Activated CD4-positive, alpha-beta T cell treated with anti-CD3 and anti-CD28 coated beads for 36 hours (primary cell): ENCODE measurements at regions of chr3 and their contacts with region 1.

Region 1: GRCh38 chr3:195271116-195271858 is at the start of gene XXYLT1:
- DNase-seq: peak; percentile 96
- ATAC-seq: peak; percentile 86
- H3K4me3 Mint-ChIP-seq: peak within 1 kb of the TSS; percentile 84
- H3K27ac Mint-ChIP-seq: peak within 1 kb of the TSS; percentile 87
- H3K4me1 Mint-ChIP-seq: peaks cover 17% of the 10 kb centered on the region
- H3K27me3 Mint-ChIP-seq: no peaks in the 10 kb centered on the region
- total RNA-seq, gene XXYLT1: 5.4 to 5.7 TPM

Region 2: DNA sequence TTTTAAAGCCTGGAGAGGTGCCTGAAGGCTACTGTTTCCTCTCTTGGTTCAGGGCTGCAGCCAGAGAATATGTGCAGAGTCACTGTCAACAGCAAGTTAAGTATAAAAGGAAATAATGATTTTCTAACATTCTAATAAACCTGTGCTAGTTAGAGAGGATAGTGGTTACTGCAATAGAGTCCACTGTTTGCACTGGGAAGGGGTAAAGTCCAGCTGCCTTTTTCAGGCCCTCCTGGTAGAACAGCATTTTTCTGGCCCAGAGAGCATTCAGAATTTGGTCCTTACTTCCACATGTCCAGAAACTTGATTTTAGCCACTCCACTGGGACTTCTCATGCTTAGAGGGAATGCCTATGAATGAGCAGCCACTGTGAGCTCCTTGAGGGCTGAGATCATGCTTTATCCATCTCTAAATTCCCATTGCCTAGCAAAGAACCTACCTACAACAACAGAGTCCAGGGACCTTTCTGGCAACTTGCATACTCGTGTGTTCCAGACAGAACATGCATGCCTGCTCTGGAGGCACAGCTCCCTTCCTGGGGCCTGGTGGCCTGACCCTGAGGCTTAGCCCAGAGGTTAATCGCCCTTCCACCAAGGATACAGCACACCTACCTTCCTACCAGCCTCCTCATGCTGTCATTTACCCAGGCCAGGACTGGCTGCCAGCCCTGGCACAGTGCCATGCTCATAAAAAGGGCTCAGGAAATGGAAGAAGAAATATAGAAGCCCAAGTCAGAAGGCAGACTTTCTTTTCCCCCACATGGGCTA is 734.2 kb before region 1 on chr3:
- CTCF ChIA-PET with region 1: no interaction called
- POLR2A ChIA-PET with region 1: no interaction called
- intact Hi-C with region 1: no loop called
- DNase-seq: no peak
- ATAC-seq: no peak
- H3K4me3 Mint-ChIP-seq: no peak overlapping the region
- H3K27ac Mint-ChIP-seq: no peak overlapping the region
- H3K4me1 Mint-ChIP-seq: peaks cover 14% of the 10 kb centered on the region
- H3K27me3 Mint-ChIP-seq: no peaks in the 10 kb centered on the region

Region 3: GRCh38 chr3:195385526-195385925 is 114.2 kb after region 1 on chr3:
- CTCF ChIA-PET with region 1: no interaction called
- POLR2A ChIA-PET with region 1: no interaction called
- intact Hi-C with region 1: no loop called
- DNase-seq: no peak
- ATAC-seq: no peak
- H3K4me3 Mint-ChIP-seq: no peak overlapping the region
- H3K27ac Mint-ChIP-seq: no peak overlapping the region
- H3K4me1 Mint-ChIP-seq: peaks cover 14% of the 10 kb centered on the region
- H3K27me3 Mint-ChIP-seq: no peaks in the 10 kb centered on the region

Region 4: DNA sequence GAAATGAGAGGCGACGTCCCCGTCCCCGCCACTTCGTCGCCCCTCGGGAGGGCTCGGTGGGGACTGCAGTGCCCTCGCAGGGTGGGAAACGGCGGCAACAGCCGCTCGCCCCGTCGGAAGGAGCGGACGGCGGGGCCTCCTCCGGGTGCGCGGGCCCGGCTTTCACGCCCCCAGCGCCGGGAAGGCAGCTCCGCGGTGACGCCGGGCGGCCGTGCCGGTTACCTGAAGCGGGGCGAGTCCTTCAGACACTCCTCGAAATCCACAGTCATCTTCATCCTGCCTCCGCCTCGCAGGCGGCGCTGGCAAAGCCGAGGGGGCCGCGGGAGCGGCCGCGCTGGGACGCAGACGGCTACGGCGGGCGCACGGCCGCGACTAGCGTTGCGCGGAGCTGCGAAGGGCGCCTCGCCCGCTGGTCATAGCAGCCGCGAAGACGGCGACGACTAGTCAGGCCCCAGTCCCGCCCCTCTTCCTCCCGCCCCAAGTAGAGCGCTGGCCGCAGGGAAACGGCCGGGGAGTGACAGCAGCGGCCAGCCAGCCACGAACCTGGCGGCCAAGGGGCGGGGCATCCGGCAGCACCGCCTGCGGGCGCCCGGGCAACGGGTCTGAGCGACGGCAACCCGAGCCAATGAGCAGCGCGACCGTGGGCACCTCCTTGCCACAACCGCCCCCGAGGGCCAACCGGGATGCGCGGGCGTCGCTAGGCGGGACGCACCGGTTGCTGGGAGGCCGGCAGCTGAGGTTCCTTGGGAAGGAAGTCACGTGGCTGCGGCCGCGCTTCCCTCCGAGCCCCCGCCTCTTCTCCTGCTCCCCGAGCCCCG is 171.5 kb after region 1 on chr3 and contains the start of gene ACAP2:
- CTCF ChIA-PET with region 1: interaction called, 8 read pairs
- POLR2A ChIA-PET with region 1: interaction called, 3 read pairs
- intact Hi-C with region 1: loop called (anchors 1 kb)
- DNase-seq: peak; percentile 99
- ATAC-seq: peak; percentile 96
- H3K4me3 Mint-ChIP-seq: peak within 1 kb of the TSS; percentile 96
- H3K27ac Mint-ChIP-seq: peak within 1 kb of the TSS; percentile 91
- H3K4me1 Mint-ChIP-seq: peaks cover 44% of the 10 kb centered on the region
- H3K27me3 Mint-ChIP-seq: no peaks in the 10 kb centered on the region
- total RNA-seq, gene ACAP2: 43.7 to 51.9 TPM

Region 5: GRCh38 chr3:195517030-195517429 is 245.7 kb after region 1 on chr3:
- CTCF ChIA-PET with region 1: interaction called, 113 read pairs
- POLR2A ChIA-PET with region 1: interaction called, 7 read pairs
- intact Hi-C with region 1: loop called (anchors 1 kb)
- DNase-seq: no peak
- ATAC-seq: no peak
- H3K4me3 Mint-ChIP-seq: no peak overlapping the region
- H3K27ac Mint-ChIP-seq: no peak overlapping the region
- H3K4me1 Mint-ChIP-seq: peaks cover 37% of the 10 kb centered on the region
- H3K27me3 Mint-ChIP-seq: no peaks in the 10 kb centered on the region

Region 6: GRCh38 chr3:195542698-195543499 is 271.6 kb after region 1 on chr3 and contains the start of gene PPP1R2:
- CTCF ChIA-PET with region 1: interaction called, 23 read pairs
- POLR2A ChIA-PET with region 1: interaction called, 8 read pairs
- intact Hi-C with region 1: loop called (anchors 1 to 2 kb)
- DNase-seq: peak; percentile 97
- ATAC-seq: peak; percentile 72
- H3K4me3 Mint-ChIP-seq: peak within 1 kb of the TSS; percentile 95
- H3K27ac Mint-ChIP-seq: peak within 1 kb of the TSS; percentile 95
- H3K4me1 Mint-ChIP-seq: peaks cover 65% of the 10 kb centered on the region
- H3K27me3 Mint-ChIP-seq: no peaks in the 10 kb centered on the region
- total RNA-seq, gene PPP1R2: 77.0 to 134 TPM

Region 7: GRCh38 chr3:195863121-195864006 is 592.1 kb after region 1 on chr3:
- CTCF ChIA-PET with region 1: interaction called, 3 read pairs
- POLR2A ChIA-PET with region 1: no interaction called
- intact Hi-C with region 1: loop called in 1 of 2 experiments (anchors 5 kb)
- DNase-seq: peak; percentile 88
- ATAC-seq: peak; percentile 88
- H3K4me3 Mint-ChIP-seq: no peak overlapping the region
- H3K27ac Mint-ChIP-seq: no peak overlapping the region
- H3K4me1 Mint-ChIP-seq: peaks cover 10% of the 10 kb centered on the region
- H3K27me3 Mint-ChIP-seq: no peaks in the 10 kb centered on the region